ENCODE measurements at regions of chr10 and their contacts with region 1.

Region 1: GRCh38 chr10:77111611-77112550 is 525.7 kb downstream of the KCNMA1 start:
- DNase-seq: peak; percentile 99
- ATAC-seq: peak; percentile 78
- H3K4me3 ChIP-seq: peak overlapping the region; percentile 4; the same call in 1 of the 2 replicates
- H3K27ac ChIP-seq: peak overlapping the region; percentile 69
- H3K4me1 ChIP-seq: peaks cover 25% of the 10 kb centered on the region
- H3K27me3 ChIP-seq: no peaks in the 10 kb centered on the region
- CTCF ChIP-seq: peak; percentile 100

Region 2: DNA sequence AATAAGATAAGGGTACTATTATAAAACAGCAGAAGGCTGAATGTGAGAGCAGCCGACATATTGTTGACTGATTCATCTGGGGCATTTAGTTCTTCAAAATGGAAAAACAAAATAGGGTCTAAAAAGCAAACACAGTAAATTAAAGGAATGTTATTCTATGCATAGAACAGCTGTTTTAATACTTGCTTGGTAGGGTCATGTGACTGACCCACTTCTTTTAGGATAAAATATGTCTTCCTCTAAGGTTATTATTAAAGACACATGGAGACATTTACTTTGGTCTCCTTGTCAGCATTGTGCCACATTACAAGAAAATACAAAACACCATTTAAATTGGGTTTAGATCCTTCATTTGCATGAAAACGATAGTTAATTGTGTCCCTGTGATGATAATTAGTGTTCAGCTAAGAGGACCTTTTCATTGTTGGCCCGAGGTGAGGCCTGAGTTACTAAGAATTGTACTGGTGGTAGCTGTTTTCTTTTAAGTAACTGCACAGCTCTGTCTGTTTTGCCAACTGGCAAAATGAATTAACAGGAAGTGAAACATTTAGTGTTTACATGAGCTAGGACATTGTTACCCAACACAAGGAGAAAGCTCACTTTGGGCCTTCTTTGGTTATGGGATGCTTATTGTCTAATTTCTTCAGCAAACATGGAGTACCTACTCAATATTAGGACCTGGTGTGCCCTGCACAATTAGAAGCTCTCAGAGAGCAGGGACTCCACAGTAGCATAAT is 916.1 kb before region 1 on chr10:
- CTCF ChIA-PET with region 1: no interaction called
- POLR2A ChIA-PET with region 1: no interaction called
- intact Hi-C with region 1: loop called (anchors 10 kb)
- DNase-seq: no peak
- ATAC-seq: no peak
- H3K4me3 ChIP-seq: no peak overlapping the region
- H3K27ac ChIP-seq: no peak overlapping the region
- H3K4me1 ChIP-seq: no peaks in the 10 kb centered on the region
- H3K27me3 ChIP-seq: peaks cover 83% of the 10 kb centered on the region
- CTCF ChIP-seq: no peak

Region 3: DNA sequence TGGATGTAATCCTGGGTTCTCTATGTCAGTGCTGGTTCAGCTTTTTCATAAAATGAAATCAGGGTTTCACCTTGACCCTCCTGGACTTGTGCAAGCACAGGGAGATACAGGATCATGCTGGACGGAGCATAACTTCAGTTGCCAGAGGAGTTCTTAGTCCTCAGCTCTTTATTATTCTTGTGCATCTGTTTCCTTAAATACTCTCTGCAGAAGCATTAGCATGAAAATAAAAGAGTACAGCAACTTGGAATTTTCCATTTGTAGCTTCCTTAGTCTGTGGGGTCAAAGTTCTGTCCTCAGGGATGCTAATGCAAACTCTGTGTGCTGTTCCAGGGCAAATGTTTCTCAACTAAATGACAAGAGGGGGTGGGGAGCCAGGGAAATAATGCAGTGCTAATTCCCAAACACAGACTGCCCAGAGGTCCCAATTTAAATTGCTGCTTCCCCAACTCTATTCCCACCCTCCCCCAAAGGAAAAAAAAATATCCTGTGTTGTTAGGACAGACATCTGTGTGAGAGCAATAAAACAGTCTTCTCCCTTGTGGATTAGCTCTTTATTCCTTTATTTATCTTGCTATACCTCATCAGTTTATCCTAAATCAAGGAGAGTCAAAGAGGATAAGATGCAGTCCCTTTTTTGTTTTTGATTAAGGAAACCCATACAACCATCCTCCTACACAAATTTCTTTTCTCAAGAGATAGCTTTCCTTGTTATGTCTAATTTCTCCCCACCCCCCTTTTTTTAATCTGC is 775.5 kb before region 1 on chr10:
- CTCF ChIA-PET with region 1: no interaction called
- POLR2A ChIA-PET with region 1: no interaction called
- intact Hi-C with region 1: loop called (anchors 10 kb)
- DNase-seq: no peak
- ATAC-seq: no peak
- H3K4me3 ChIP-seq: no peak overlapping the region
- H3K27ac ChIP-seq: no peak overlapping the region
- H3K4me1 ChIP-seq: peaks cover 16% of the 10 kb centered on the region
- H3K27me3 ChIP-seq: no peaks in the 10 kb centered on the region
- CTCF ChIP-seq: no peak

Region 4: DNA sequence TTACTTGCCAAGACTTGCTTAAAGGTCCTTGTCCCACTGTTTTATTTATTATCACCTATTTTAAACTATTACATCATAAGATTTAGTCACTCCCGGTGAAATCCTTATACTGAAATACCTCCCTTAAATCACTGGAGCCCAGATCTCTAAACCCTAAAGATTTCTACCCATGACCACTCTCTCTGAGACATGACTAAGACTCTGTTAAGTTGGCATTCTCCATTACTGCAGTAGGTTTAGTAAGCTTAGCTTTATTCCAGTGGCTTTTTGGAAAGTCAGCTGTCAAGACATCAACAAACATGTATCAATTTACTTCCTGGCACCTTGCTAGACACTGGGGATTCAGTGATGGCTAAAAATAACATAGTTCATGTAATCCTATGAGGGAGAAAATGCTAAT is 348.5 kb before region 1 on chr10:
- CTCF ChIA-PET with region 1: no interaction called
- POLR2A ChIA-PET with region 1: no interaction called
- intact Hi-C with region 1: loop called (anchors 10 kb)
- DNase-seq: no peak
- ATAC-seq: no peak; the same call in 1 of the 2 replicates
- H3K4me3 ChIP-seq: no peak overlapping the region
- H3K27ac ChIP-seq: no peak overlapping the region
- H3K4me1 ChIP-seq: no peaks in the 10 kb centered on the region
- H3K27me3 ChIP-seq: peaks cover 87% of the 10 kb centered on the region
- CTCF ChIP-seq: no peak

Region 5: GRCh38 chr10:76962851-76963250 is 149.0 kb before region 1 on chr10:
- CTCF ChIA-PET with region 1: no interaction called
- POLR2A ChIA-PET with region 1: no interaction called
- intact Hi-C with region 1: loop called (anchors 10 kb)
- DNase-seq: no peak
- ATAC-seq: no peak
- H3K4me3 ChIP-seq: no peak overlapping the region
- H3K27ac ChIP-seq: no peak overlapping the region
- H3K4me1 ChIP-seq: no peaks in the 10 kb centered on the region
- H3K27me3 ChIP-seq: no peaks in the 10 kb centered on the region
- CTCF ChIP-seq: no peak

Region 6: GRCh38 chr10:77004917-77005564 is 106.8 kb before region 1 on chr10:
- CTCF ChIA-PET with region 1: interaction called, 4 read pairs
- POLR2A ChIA-PET with region 1: no interaction called
- intact Hi-C with region 1: loop called (anchors 1 kb)
- DNase-seq: peak; percentile 99
- ATAC-seq: peak; percentile 89
- H3K4me3 ChIP-seq: no peak overlapping the region
- H3K27ac ChIP-seq: no peak overlapping the region
- H3K4me1 ChIP-seq: peaks cover 4% of the 10 kb centered on the region; the same call in 1 of the 2 replicates
- H3K27me3 ChIP-seq: no peaks in the 10 kb centered on the region
- CTCF ChIP-seq: peak; percentile 100

Region 7: DNA sequence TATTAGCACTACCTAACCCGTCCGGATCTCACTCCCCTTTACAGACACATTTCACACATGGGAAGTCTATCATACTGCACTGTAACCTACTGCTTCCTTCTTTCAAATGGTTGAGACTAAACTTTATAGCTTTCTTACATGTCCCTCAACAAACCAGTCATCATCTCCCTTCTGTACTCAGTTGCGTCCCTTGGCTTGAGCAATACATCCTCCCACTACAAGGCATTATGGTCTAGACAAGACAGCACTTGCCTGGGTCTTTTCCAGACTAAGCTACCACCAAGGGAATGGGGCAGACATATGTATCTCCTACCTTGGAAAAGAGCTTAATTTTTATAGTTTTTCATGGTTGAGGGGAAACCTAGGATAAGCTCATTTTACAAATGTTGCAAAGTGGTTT is 49.5 kb before region 1 on chr10:
- CTCF ChIA-PET with region 1: no interaction called
- POLR2A ChIA-PET with region 1: no interaction called
- intact Hi-C with region 1: loop called (anchors 5 kb)
- DNase-seq: no peak
- ATAC-seq: no peak
- H3K4me3 ChIP-seq: no peak overlapping the region
- H3K27ac ChIP-seq: no peak overlapping the region
- H3K4me1 ChIP-seq: peaks cover 12% of the 10 kb centered on the region
- H3K27me3 ChIP-seq: no peaks in the 10 kb centered on the region
- CTCF ChIP-seq: no peak

Region 8: GRCh38 chr10:77072836-77073662 is 38.8 kb before region 1 on chr10:
- CTCF ChIA-PET with region 1: no interaction called
- POLR2A ChIA-PET with region 1: no interaction called
- intact Hi-C with region 1: no loop called
- DNase-seq: no peak
- ATAC-seq: no peak
- H3K4me3 ChIP-seq: no peak overlapping the region
- H3K27ac ChIP-seq: no peak overlapping the region
- H3K4me1 ChIP-seq: no peaks in the 10 kb centered on the region
- H3K27me3 ChIP-seq: no peaks in the 10 kb centered on the region
- CTCF ChIP-seq: no peak

Region 9: GRCh38 chr10:77090381-77091356 is 21.2 kb before region 1 on chr10:
- CTCF ChIA-PET with region 1: no interaction called
- POLR2A ChIA-PET with region 1: no interaction called
- intact Hi-C with region 1: no loop called
- DNase-seq: no peak
- ATAC-seq: no peak
- H3K4me3 ChIP-seq: no peak overlapping the region
- H3K27ac ChIP-seq: no peak overlapping the region
- H3K4me1 ChIP-seq: no peaks in the 10 kb centered on the region
- H3K27me3 ChIP-seq: no peaks in the 10 kb centered on the region
- CTCF ChIP-seq: no peak